Cardiac septum (tissue), 1 donor: ENCODE measurements at regions of chr11 and their contacts with region 1.

Region 1: GRCh38 chr11:36746886-36747710 is 149.1 kb upstream of the RAG2 start:
- DNase-seq: peak; percentile 85

Region 2: GRCh38 chr11:36702330-36703055 is 44.6 kb before region 1 on chr11:
- intact Hi-C with region 1: loop called (anchors 1 kb)
- DNase-seq: no peak

Region 3: GRCh38 chr11:36803084-36803483 is 56.0 kb after region 1 on chr11:
- intact Hi-C with region 1: no loop called
- DNase-seq: no peak